SK-N-SH (cell line): ENCODE measurements at regions of chr14 and their contacts with region 1.

Region 1: DNA sequence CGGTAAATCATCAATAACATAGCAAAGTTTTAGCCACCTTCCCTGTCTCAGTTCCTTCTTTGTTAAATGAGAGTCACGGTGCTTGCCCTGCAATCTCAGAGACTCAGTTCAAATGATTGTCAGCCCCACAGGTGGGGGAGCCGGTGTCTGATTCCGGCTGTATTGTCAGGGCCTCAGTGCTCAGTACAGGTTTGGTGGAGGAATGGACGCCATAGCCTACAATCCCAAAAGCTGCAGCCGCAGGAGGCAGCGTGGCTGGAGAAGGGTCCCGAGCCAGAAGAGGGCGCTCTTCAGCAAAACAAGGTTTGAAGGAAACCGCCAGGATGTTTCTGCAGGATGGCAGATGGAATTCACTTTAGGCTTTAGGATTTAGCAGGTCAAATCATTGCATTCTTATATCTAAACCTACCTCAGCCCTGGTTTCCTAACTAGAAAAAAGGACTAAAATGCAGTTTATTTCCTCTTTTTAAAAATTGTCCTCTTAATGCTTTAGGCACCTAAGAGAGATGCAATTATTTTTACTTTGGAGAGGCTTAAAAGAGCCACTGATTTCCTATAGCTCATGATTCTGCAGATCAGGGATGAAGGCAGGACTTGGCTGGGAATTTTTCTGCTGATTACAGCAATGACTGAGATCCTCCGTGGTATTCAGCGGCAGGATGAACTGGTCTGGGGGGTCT is 29.2 kb downstream of the FOS start:
- DNase-seq: peak; percentile 70
- H3K4me3 ChIP-seq: peak overlapping the region in 1 of 2 experiments; percentile 46; a peak in 1 of 4 replicates
- H3K27ac ChIP-seq: no peak overlapping the region
- H3K4me1 ChIP-seq: peaks cover 6 to 14% of the 10 kb centered on the region in 2 experiments; a peak in 2 of 4 replicates
- H3K27me3 ChIP-seq: no peaks in the 10 kb centered on the region
- CTCF ChIP-seq: peak; percentile 95
- EP300 ChIP-seq: no peak
- RAD21 ChIP-seq: peak; percentile 97

Region 2: GRCh38 chr14:75223664-75224154 is 84.1 kb before region 1 on chr14:
- CTCF ChIA-PET with region 1: no interaction called
- POLR2A ChIA-PET with region 1: no interaction called
- DNase-seq: no peak
- H3K4me3 ChIP-seq: no peak overlapping the region
- H3K27ac ChIP-seq: no peak overlapping the region
- H3K4me1 ChIP-seq: no peaks in the 10 kb centered on the region; a peak in 2 of 4 replicates
- H3K27me3 ChIP-seq: no peaks in the 10 kb centered on the region
- CTCF ChIP-seq: no peak
- EP300 ChIP-seq: no peak
- RAD21 ChIP-seq: no peak

Region 3: DNA sequence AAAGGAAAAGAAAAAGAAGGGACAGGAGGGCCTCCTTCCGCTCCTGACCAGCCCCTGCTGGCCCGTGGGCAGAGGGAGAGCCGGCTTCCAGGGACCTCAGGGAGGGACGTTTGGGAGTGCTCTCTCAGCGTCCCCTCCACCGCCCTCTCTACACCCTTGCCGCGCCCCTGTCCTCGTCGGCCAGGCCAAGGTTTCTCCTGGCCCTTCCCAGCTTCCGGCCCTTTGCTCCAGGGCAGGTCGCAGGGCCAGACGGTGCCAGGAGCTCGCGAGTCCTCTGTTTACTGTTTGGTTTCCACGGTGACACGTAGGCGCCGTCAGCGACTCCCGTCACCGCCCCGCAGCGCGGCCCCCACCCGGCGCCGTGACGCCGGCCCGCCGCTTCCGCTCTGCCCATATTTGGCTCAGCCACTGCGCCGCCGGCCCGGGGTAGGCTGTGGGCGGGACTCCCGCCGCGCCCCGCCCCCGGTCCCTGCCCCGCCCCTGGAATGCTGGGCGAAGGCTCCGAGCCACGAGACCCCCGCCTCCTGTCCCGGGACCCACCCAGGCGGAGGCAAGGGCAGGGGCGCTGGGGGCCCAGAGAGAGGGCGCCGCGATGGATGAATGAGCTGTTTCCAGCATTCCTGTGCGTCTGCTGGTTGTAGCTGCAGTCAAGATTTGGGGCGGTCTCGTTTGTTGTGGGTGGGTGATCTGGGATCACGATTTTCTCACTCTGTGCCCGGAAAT is 13.8 kb before region 1 on chr14:
- CTCF ChIA-PET with region 1: interaction called, 38 read pairs
- POLR2A ChIA-PET with region 1: interaction called, 4 read pairs
- DNase-seq: peak; percentile 99
- H3K4me3 ChIP-seq: peak overlapping the region; percentile 72 to 84
- H3K27ac ChIP-seq: peak overlapping the region; percentile 72 to 98
- H3K4me1 ChIP-seq: peaks cover 0 to 13% of the 10 kb centered on the region in 2 experiments; a peak in 1 of 4 replicates
- H3K27me3 ChIP-seq: no peaks in the 10 kb centered on the region; the same call in 1 of the 2 replicates
- CTCF ChIP-seq: no peak
- EP300 ChIP-seq: 0 out of 4 replicates have a peak, but pooled peaks of 1 of the 2 experiments have one; percentile 21
- RAD21 ChIP-seq: 0 out of 2 replicates have a peak, but pooled peaks have one; percentile 6

Region 4: GRCh38 chr14:75427482-75428229 is 119.8 kb after region 1 on chr14 and contains the start of gene JDP2:
- CTCF ChIA-PET with region 1: interaction called, 20 read pairs
- POLR2A ChIA-PET with region 1: interaction called, 5 read pairs
- DNase-seq: peak; percentile 93
- H3K4me3 ChIP-seq: peak within 1 kb of the TSS; percentile 68 to 80
- H3K27ac ChIP-seq: peak within 1 kb of the TSS; percentile 34 to 69; a peak in 2 of 4 replicates
- H3K4me1 ChIP-seq: peaks cover 7 to 37% of the 10 kb centered on the region in 2 experiments; a peak in 2 of 4 replicates
- H3K27me3 ChIP-seq: no peaks in the 10 kb centered on the region
- CTCF ChIP-seq: no peak
- EP300 ChIP-seq: no peak
- RAD21 ChIP-seq: no peak
- polyA plus RNA-seq, gene JDP2: 21.1 and 22.3 TPM in 2 replicates

Region 5: GRCh38 chr14:75450381-75451276 is 142.8 kb after region 1 on chr14:
- CTCF ChIA-PET with region 1: interaction called, 13 read pairs
- POLR2A ChIA-PET with region 1: no interaction called
- DNase-seq: no peak
- H3K4me3 ChIP-seq: no peak overlapping the region
- H3K27ac ChIP-seq: no peak overlapping the region
- H3K4me1 ChIP-seq: peaks cover 16 to 42% of the 10 kb centered on the region in 2 experiments; a peak in 2 of 4 replicates
- H3K27me3 ChIP-seq: no peaks in the 10 kb centered on the region
- CTCF ChIP-seq: no peak
- EP300 ChIP-seq: no peak
- RAD21 ChIP-seq: no peak

Region 6: GRCh38 chr14:75497191-75497590 is 189.4 kb after region 1 on chr14:
- CTCF ChIA-PET with region 1: interaction called, 291 read pairs
- POLR2A ChIA-PET with region 1: no interaction called
- DNase-seq: no peak
- H3K4me3 ChIP-seq: no peak overlapping the region
- H3K27ac ChIP-seq: no peak overlapping the region
- H3K4me1 ChIP-seq: no peaks in the 10 kb centered on the region
- H3K27me3 ChIP-seq: no peaks in the 10 kb centered on the region
- CTCF ChIP-seq: no peak
- EP300 ChIP-seq: no peak
- RAD21 ChIP-seq: no peak